ENCODE measurements at regions of chr13 and their contacts with region 1.

Region 1: GRCh38 chr13:99477523-99477922 is 23.7 kb upstream of the TM9SF2 start:
- DNase-seq: no peak

Region 2: DNA sequence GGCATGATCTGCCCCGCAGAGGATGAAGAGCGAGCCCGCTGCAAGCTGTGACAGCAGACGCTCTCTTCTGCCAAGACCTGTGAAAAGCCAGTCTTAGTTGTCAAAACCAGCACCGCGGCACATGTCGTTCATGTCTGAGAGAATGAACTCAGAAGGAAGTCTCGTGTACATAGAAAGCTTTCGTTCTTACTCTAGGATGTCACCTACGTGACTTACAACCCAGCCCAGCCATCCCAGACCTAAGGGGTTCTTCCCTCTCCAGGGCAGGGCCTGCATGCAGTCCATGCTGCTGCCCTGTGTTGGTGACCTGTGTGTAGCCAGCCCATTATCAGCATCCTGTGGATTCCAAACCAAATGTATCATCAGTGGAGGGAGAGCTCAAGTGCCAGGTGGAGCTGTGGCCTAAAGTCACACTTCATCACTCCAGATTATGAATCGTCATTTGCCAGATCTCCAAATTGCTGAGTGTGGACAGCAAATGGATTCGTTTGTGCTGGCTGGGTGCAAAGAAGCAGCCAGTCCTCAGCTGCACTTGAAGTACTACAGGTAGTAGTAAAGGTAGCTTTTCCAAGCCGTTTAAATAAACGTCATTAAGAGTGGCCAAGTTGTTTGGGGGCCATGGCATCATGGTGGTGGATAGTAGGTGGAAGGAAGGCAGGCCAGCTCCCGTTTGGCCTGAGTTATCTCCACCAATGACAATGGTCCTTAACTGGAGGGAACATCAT is 96.4 kb before region 1 on chr13:
- intact Hi-C with region 1: loop called in 1 of 2 experiments (anchors 5 kb)
- DNase-seq: peak; percentile 77

Region 3: GRCh38 chr13:99464441-99464949 is 13.0 kb before region 1 on chr13:
- intact Hi-C with region 1: no loop called
- DNase-seq: no peak

Region 4: GRCh38 chr13:99536023-99536422 is 58.5 kb after region 1 on chr13:
- intact Hi-C with region 1: no loop called
- DNase-seq: no peak

Region 5: DNA sequence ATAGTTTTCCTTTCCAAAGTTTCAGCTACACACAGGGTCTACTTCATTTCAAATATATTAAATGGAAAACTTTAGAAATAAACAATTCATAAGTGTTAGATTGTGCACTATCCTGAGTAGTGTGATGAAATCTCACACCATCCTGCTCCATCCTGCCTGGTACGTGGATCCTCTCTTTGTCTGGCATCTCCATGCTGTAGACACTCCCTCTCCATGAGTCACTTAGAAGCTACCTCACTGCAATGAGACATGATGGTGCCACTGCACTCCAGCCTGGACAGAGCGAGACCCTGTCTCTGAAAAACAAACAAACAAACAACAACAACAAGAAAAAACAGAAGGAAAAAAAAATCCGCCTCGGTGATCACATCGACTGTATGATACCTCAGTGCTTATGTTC is 803.2 kb after region 1 on chr13:
- intact Hi-C with region 1: loop called in 1 of 2 experiments (anchors 5 kb)
- DNase-seq: no peak

Measured in posterior vena cava (tissue), 2 donors.